ENCODE measurements at regions of chr12 and their contacts with region 1.

Region 1: GRCh38 chr12:52050761-52051541 is at the start of gene NR4A1:
- DNase-seq: peak; percentile 95
- ATAC-seq: peak; percentile 97
- H3K4me3 ChIP-seq: peak within 1 kb of the TSS; percentile 97
- H3K27ac ChIP-seq: peak within 1 kb of the TSS; percentile 86
- H3K4me1 ChIP-seq: peaks cover 18% of the 10 kb centered on the region
- H3K27me3 ChIP-seq: no peaks in the 10 kb centered on the region
- CTCF ChIP-seq: peak; percentile 47; the same call in 1 of the 2 replicates
- POLR2A ChIP-seq: peak; percentile 97
- RAD21 ChIP-seq: no peak; the same call in none of the 2 replicates
- total RNA-seq, gene NR4A1: 6.6 and 23.1 TPM in 2 replicates

Region 2: GRCh38 chr12:52063981-52064649 is 13.2 kb after region 1 on chr12:
- CTCF ChIA-PET with region 1: interaction called, 4 read pairs
- POLR2A ChIA-PET with region 1: interaction called, 4 read pairs
- dilution Hi-C with region 1: no loop called
- in situ Hi-C with region 1: no loop called
- intact Hi-C with region 1: loop called (anchors 1 kb)
- DNase-seq: peak; percentile 97
- ATAC-seq: peak; percentile 87
- H3K4me3 ChIP-seq: no peak overlapping the region
- H3K27ac ChIP-seq: peak overlapping the region; percentile 93
- H3K4me1 ChIP-seq: peaks cover 25% of the 10 kb centered on the region
- H3K27me3 ChIP-seq: no peaks in the 10 kb centered on the region
- CTCF ChIP-seq: no peak
- POLR2A ChIP-seq: peak; percentile 79
- RAD21 ChIP-seq: no peak

Region 3: GRCh38 chr12:52119398-52120254 is 68.7 kb after region 1 on chr12:
- CTCF ChIA-PET with region 1: no interaction called
- POLR2A ChIA-PET with region 1: no interaction called
- dilution Hi-C with region 1: no loop called
- in situ Hi-C with region 1: no loop called
- intact Hi-C with region 1: no loop called
- DNase-seq: no peak
- ATAC-seq: no peak
- H3K4me3 ChIP-seq: no peak overlapping the region
- H3K27ac ChIP-seq: no peak overlapping the region
- H3K4me1 ChIP-seq: no peaks in the 10 kb centered on the region
- H3K27me3 ChIP-seq: peaks cover 3% of the 10 kb centered on the region
- CTCF ChIP-seq: peak; percentile 32; the same call in 1 of the 2 replicates
- POLR2A ChIP-seq: no peak
- RAD21 ChIP-seq: no peak

Measured in IMR-90 (cell line).